ENCODE measurements at regions of chr12 and their contacts with region 1.

Region 1: GRCh38 chr12:53441040-53441833 is at the start of gene PRR13:
- DNase-seq: peak; percentile 93 to 99
- ATAC-seq: peak; percentile 97 to 100 (median 99)
- H3K4me3 ChIP-seq: peak within 1 kb of the TSS; percentile 99
- H3K4me3 Mint-ChIP-seq: peak within 1 kb of the TSS; percentile 99
- H3K27ac ChIP-seq: peak within 1 kb of the TSS; percentile 82
- H3K27ac Mint-ChIP-seq: peak within 1 kb of the TSS; percentile 94 to 96
- H3K4me1 ChIP-seq: peaks cover 36% of the 10 kb centered on the region
- H3K4me1 Mint-ChIP-seq: peaks cover 38 to 50% of the 10 kb centered on the region in 2 donors
- H3K27me3 ChIP-seq: no peaks in the 10 kb centered on the region
- H3K27me3 Mint-ChIP-seq: no peaks in the 10 kb centered on the region
- CTCF ChIP-seq: no peak
- total RNA-seq, gene PRR13: 214 to 233 (median 231) TPM

Region 2: DNA sequence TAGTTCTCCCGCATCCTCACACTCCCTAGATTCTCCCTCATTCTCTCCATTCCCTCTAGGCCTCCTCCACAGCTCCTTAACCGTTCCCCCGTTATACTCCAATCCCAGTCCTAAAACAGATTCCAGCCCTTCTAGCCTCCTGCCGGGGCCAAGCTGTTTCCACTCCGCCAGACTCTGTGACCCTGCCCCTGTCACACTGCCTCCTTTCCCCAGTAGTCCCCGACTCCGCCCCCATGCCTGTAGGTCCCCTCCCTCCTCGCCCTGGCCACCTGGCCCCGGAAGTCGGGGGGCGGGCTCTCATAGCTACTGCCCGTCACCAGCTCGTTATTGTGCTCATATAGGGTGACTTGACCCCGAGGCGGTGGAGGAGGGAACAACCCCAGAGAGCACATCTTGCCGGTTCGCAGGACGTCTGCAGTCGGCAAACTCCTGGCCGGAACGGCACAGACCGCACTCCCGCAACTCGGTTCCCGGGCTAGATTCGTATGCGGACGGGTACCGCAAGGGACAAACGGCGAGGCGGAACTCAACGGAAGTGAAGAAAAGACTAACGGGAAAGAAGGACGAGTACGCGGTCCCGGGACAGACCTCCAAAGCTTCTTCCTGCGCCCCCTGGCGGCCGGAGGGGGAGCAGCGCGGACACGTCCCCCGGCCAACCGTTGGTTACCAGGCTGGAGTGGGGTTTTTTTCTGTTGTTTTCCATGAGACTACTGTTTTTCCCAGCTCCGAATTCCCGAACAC is 120.0 kb before region 1 on chr12 and contains the start of gene AAAS:
- intact Hi-C with region 1: no loop called
- DNase-seq: peak; percentile 92 to 96
- ATAC-seq: peak; percentile 85 to 94 (median 85)
- H3K4me3 ChIP-seq: peak within 1 kb of the TSS; percentile 80
- H3K4me3 Mint-ChIP-seq: peak within 1 kb of the TSS; percentile 99
- H3K27ac ChIP-seq: peak within 1 kb of the TSS; percentile 78
- H3K27ac Mint-ChIP-seq: peak within 1 kb of the TSS; percentile 94 to 98
- H3K4me1 ChIP-seq: peaks cover 37% of the 10 kb centered on the region
- H3K4me1 Mint-ChIP-seq: peaks cover 33 to 43% of the 10 kb centered on the region in 2 donors
- H3K27me3 ChIP-seq: no peaks in the 10 kb centered on the region
- H3K27me3 Mint-ChIP-seq: no peaks in the 10 kb centered on the region
- CTCF ChIP-seq: peak; percentile 99
- total RNA-seq, gene AAAS: 34.3 to 50.4 (median 45.0) TPM

Region 3: DNA sequence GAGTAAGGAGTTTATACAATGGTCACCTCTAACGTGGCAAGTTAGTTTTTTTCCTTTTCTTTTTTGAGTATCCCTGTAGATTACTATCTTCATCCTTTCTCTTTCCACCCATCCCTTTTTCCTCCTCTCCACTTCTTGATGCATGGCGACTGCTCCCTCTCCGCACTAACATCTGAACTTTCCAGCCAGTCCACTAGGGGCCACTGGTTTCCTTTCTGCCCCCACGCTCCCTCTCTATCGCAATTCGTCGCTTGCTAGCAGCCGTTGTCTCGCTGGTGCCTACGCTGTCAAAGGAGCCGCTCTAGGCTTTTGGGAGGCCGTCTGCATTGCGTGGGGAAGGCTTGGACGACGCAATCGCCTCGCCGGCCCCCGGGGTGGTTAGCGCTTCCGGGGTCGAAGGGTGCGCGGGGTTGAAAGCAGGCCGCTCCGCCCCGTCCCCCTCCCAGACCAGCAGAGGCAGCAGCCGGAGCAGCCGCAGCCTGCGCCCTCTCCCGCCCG is 10.5 kb after region 1 on chr12 and contains the start of gene PCBP2:
- intact Hi-C with region 1: loop called (anchors 1 kb)
- DNase-seq: peak; percentile 93 to 99
- ATAC-seq: peak; percentile 89 to 96 (median 90)
- H3K4me3 ChIP-seq: peak within 1 kb of the TSS; percentile 97
- H3K4me3 Mint-ChIP-seq: peak within 1 kb of the TSS; percentile 88
- H3K27ac ChIP-seq: peak within 1 kb of the TSS; percentile 95
- H3K27ac Mint-ChIP-seq: peak within 1 kb of the TSS; percentile 81 to 86
- H3K4me1 ChIP-seq: peaks cover 4% of the 10 kb centered on the region
- H3K4me1 Mint-ChIP-seq: peaks cover 34 to 39% of the 10 kb centered on the region in 2 donors
- H3K27me3 ChIP-seq: no peaks in the 10 kb centered on the region
- H3K27me3 Mint-ChIP-seq: no peaks in the 10 kb centered on the region
- CTCF ChIP-seq: peak; percentile 85
- total RNA-seq, gene PCBP2: 910 to 1,083 (median 943) TPM